ENCODE measurements at regions of chr1 and their contacts with region 1.

Region 1: GRCh38 chr1:192225703-192226102 is 67.4 kb downstream of the RGS18 start:
- DNase-seq: peak; percentile 96
- H3K4me3 ChIP-seq: no peak overlapping the region
- H3K27ac ChIP-seq: peak overlapping the region; percentile 85
- H3K4me1 ChIP-seq: peaks cover 35% of the 10 kb centered on the region
- H3K27me3 ChIP-seq: no peaks in the 10 kb centered on the region
- CTCF ChIP-seq: no peak

Region 2: DNA sequence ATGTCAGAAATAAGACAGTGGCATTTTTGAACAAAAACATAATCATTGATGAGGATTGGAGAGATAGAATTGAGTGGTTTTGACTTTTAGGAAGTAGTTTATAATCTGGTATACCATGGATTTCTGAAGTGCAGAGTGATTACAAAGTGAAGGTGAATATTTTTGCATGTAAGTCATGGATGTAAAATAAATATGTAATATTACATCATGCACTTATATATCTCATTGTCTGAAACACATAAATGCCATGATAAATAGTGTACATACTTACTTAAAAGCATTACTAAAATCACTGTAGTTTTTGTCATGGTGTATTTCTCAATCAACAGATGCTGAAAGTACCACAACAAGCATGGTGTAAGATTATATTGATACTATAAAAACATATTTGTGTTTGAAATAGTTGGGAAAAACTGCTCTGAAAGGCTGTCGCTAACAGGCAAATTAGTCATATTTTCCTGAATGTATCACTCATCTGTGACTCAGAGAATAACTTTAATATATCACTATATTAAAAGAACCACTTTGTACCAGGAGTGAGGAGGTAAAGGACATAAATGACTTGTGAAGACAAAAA is 92.3 kb before region 1 on chr1:
- CTCF ChIA-PET with region 1: no interaction called
- POLR2A ChIA-PET with region 1: no interaction called
- intact Hi-C with region 1: loop called (anchors 5 kb)
- DNase-seq: no peak
- H3K4me3 ChIP-seq: no peak overlapping the region
- H3K27ac ChIP-seq: peak overlapping the region; percentile 62
- H3K4me1 ChIP-seq: peaks cover 22% of the 10 kb centered on the region
- H3K27me3 ChIP-seq: no peaks in the 10 kb centered on the region
- CTCF ChIP-seq: no peak

Region 3: GRCh38 chr1:192311281-192311680 is 85.6 kb after region 1 on chr1:
- CTCF ChIA-PET with region 1: no interaction called
- POLR2A ChIA-PET with region 1: no interaction called
- intact Hi-C with region 1: loop called (anchors 5 kb)
- DNase-seq: peak; percentile 86
- H3K4me3 ChIP-seq: no peak overlapping the region
- H3K27ac ChIP-seq: peak overlapping the region; percentile 62
- H3K4me1 ChIP-seq: peaks cover 44% of the 10 kb centered on the region
- H3K27me3 ChIP-seq: no peaks in the 10 kb centered on the region
- CTCF ChIP-seq: peak; percentile 81